Activated T-helper 1 cell treated with anti-CD3 and anti-CD28 coated beads, Interleukin-12 subunit alpha, Interleukin-12 subunit beta, Interleukin-2, Interleukin-4 antibody, amounts not matched to agents 30 ng/mL and 10 ng/mL and 1 ng/mL, durations not matched to agents 14 hours and 24 hours and 36 hours (primary cell): ENCODE measurements at regions of chr21 and their contacts with region 1.

Region 1: GRCh38 chr21:25734904-25735645 is at the starts of genes ATP5PF and GABPA:
- DNase-seq: peak; percentile 96
- H3K4me3 Mint-ChIP-seq: peak within 1 kb of the TSS; percentile 97
- H3K27ac Mint-ChIP-seq: peak within 1 kb of the TSS; percentile 100
- H3K4me1 Mint-ChIP-seq: peaks cover 41% of the 10 kb centered on the region
- H3K27me3 Mint-ChIP-seq: no peaks in the 10 kb centered on the region
- total RNA-seq, gene ATP5PF: 152 and 161 TPM in 2 replicates
- total RNA-seq, gene GABPA: 26.7 and 26.9 TPM in 2 replicates

Region 2: GRCh38 chr21:24428591-24429199 is 1306.4 kb before region 1 on chr21:
- intact Hi-C with region 1: loop called (anchors 5 kb)
- DNase-seq: peak; percentile 2
- H3K4me3 Mint-ChIP-seq: peak overlapping the region; percentile 90
- H3K27ac Mint-ChIP-seq: peak overlapping the region; percentile 88
- H3K4me1 Mint-ChIP-seq: peaks cover 22% of the 10 kb centered on the region
- H3K27me3 Mint-ChIP-seq: no peaks in the 10 kb centered on the region

Region 3: GRCh38 chr21:25457411-25457810 is 277.7 kb before region 1 on chr21:
- intact Hi-C with region 1: loop called (anchors 1 kb)
- DNase-seq: no peak
- H3K4me3 Mint-ChIP-seq: peak overlapping the region; percentile 61
- H3K27ac Mint-ChIP-seq: peak overlapping the region; percentile 88
- H3K4me1 Mint-ChIP-seq: peaks cover 71% of the 10 kb centered on the region
- H3K27me3 Mint-ChIP-seq: no peaks in the 10 kb centered on the region

Region 4: GRCh38 chr21:25607151-25608043 is 127.7 kb before region 1 on chr21 and contains the start of gene MRPL39:
- intact Hi-C with region 1: loop called (anchors 1 kb)
- DNase-seq: peak; percentile 83
- H3K4me3 Mint-ChIP-seq: peak within 1 kb of the TSS; percentile 100
- H3K27ac Mint-ChIP-seq: peak within 1 kb of the TSS; percentile 100
- H3K4me1 Mint-ChIP-seq: peaks cover 36% of the 10 kb centered on the region
- H3K27me3 Mint-ChIP-seq: no peaks in the 10 kb centered on the region
- total RNA-seq, gene MRPL39: 48.6 and 55.8 TPM in 2 replicates

Region 5: DNA sequence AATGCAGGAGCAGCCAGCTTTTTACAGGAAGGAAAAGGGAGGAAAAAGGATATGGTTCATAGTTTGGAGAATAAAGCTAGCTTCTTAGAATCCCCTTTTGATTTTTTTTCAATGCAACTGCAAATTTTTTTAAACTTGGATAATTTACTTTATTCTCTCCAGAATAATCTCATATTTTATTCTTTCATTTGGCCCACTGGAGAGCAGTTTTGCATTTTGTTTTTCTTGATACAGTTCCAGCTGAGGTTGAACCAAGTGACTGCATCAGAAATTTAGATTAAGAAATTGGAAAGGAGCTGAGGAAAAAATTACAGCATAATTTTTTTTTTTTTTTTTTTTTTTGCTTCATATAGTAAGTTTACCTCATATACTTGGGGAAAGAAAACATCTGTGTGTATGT is 22.5 kb after region 1 on chr21:
- intact Hi-C with region 1: loop called (anchors 2 kb)
- DNase-seq: no peak
- H3K4me3 Mint-ChIP-seq: no peak overlapping the region
- H3K27ac Mint-ChIP-seq: no peak overlapping the region
- H3K4me1 Mint-ChIP-seq: peaks cover 38% of the 10 kb centered on the region
- H3K27me3 Mint-ChIP-seq: no peaks in the 10 kb centered on the region

Region 6: DNA sequence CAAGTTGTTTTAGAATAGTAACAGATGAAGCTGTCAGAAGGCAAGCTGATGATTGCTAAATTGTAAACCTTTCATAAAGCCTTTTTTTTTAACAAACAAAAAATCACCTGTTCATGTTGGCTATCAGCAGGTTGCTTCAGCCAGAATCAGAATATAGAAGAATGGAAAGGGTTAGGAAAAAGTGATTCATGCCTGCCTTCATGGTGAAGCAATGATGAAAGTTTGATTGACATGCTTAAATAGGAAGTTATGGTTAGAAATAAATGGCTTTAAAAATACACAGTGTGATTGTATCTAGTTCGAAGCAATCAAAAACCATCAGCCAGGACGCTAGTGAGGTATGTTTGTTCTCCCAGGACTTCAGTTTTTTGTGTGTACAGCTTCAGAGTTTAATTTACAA is 37.6 kb after region 1 on chr21:
- intact Hi-C with region 1: no loop called
- DNase-seq: no peak
- H3K4me3 Mint-ChIP-seq: no peak overlapping the region
- H3K27ac Mint-ChIP-seq: peak overlapping the region; percentile 23
- H3K4me1 Mint-ChIP-seq: peaks cover 5% of the 10 kb centered on the region
- H3K27me3 Mint-ChIP-seq: no peaks in the 10 kb centered on the region

Region 7: DNA sequence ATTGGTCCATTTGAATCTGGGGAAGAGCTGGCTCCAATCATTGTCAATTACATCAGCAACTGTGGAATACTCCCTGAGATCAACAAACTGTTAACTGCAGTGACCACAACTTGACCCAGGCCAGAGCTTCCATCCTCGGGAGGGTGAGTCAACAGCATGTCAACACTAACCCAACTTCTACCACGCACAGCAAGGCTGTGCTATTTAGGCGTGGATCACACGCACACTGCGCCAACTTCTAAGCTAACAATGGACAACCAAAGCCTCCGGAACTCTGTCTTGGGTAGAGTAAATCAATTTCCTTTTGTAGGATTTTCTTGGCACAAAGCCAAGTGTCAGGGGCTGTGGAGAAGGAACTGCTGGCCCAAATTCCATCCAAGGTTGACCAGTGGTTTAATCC is 405.1 kb after region 1 on chr21:
- intact Hi-C with region 1: no loop called
- DNase-seq: no peak
- H3K4me3 Mint-ChIP-seq: no peak overlapping the region
- H3K27ac Mint-ChIP-seq: no peak overlapping the region
- H3K4me1 Mint-ChIP-seq: peaks cover 10% of the 10 kb centered on the region
- H3K27me3 Mint-ChIP-seq: peaks cover 3% of the 10 kb centered on the region

Region 8: DNA sequence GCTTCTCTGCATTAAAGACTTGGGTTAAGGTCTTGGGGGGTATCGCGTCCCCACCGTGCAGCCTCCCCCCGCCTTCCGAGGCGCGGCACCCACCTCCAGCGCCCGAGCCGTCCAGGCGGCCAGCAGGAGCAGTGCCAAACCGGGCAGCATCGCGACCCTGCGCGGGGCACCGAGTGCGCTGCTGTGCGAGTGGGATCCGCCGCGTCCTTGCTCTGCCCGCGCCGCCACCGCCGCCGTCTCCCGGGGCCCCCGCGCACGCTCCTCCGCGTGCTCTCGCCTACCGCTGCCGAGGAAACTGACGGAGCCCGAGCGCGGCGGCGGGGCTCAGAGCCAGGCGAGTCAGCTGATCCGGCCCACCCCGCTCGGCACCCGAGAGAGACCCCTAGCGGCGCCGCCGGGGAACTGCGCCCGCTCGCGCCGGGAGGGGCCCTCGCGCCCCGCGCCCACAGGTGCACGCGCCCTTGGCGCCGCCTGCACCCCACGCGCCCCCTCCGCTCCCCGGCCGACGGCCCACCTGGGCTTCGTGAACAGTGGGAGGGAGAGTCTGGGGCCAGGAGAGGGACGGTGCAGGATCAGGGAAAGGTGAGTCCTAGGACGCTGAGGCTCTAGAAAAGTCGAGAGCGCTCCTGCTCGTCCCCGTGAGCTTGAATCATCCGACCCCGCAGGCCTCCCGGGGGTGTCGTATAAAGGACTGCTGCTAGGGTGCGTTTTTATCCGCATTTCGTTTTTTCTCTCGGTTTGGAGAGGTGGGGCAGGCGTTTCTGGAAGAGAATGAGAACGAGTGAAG is 435.6 kb after region 1 on chr21 and contains the start of gene APP:
- intact Hi-C with region 1: loop called (anchors 1 kb)
- DNase-seq: peak; percentile 87
- H3K4me3 Mint-ChIP-seq: peak within 1 kb of the TSS; percentile 88
- H3K27ac Mint-ChIP-seq: peak within 1 kb of the TSS; percentile 67
- H3K4me1 Mint-ChIP-seq: peaks cover 28% of the 10 kb centered on the region
- H3K27me3 Mint-ChIP-seq: peaks cover 4% of the 10 kb centered on the region
- total RNA-seq, gene APP: 61.3 and 66.6 TPM in 2 replicates

Region 9: GRCh38 chr21:26320596-26320995 is 585.5 kb after region 1 on chr21:
- intact Hi-C with region 1: no loop called
- DNase-seq: no peak
- H3K4me3 Mint-ChIP-seq: no peak overlapping the region
- H3K27ac Mint-ChIP-seq: no peak overlapping the region
- H3K4me1 Mint-ChIP-seq: no peaks in the 10 kb centered on the region
- H3K27me3 Mint-ChIP-seq: no peaks in the 10 kb centered on the region